AG04450 (cell line): ENCODE measurements at regions of chr10 and their contacts with region 1.

Region 1: DNA sequence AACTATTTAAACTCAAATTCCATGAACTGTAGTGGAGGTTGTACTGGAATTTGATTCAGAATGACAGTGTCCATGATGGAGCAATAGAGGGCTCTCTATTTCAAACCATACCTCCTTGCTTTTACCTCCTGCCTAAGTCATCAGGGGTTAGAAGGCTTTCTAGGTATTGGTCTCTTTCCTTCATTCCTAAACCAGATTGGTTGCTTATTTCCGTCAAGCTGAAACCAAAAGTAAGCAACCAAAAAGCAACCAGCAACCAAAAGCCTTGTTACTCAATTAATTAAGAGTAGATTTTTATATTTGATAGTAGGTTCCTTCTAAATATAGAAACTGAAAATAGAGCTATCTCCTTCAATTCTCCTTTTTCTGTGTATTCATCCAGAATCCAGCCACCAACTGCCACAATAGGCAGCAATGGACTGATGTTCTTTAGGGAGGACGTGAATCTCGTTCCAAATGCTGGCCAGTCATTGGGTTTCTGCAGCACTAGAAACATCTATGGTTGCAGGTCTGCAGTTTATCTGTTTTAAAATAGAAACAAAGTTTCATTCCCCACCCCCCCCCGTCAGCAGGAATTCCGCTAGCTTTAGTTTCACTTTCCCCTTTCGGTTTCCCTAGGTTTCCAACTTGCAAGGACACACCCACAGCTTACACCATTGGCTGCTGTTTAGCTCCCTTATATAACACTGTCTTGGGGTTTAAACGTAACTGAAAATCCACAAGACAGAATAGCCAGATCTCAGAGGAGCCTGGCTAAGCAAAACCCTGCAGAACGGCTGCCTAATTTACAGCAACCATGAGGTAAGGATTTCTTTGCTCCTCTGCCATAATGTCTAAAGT is at the start of gene IFIT1:
- DNase-seq: peak; percentile 85
- H3K4me3 ChIP-seq: peak within 1 kb of the TSS; percentile 75
- H3K27ac ChIP-seq: peak within 1 kb of the TSS; percentile 81
- H3K27me3 ChIP-seq: no peaks in the 10 kb centered on the region
- CTCF ChIP-seq: no peak
- polyA plus RNA-seq, gene IFIT1: 24.3 and 32.8 TPM in 2 replicates

Region 2: DNA sequence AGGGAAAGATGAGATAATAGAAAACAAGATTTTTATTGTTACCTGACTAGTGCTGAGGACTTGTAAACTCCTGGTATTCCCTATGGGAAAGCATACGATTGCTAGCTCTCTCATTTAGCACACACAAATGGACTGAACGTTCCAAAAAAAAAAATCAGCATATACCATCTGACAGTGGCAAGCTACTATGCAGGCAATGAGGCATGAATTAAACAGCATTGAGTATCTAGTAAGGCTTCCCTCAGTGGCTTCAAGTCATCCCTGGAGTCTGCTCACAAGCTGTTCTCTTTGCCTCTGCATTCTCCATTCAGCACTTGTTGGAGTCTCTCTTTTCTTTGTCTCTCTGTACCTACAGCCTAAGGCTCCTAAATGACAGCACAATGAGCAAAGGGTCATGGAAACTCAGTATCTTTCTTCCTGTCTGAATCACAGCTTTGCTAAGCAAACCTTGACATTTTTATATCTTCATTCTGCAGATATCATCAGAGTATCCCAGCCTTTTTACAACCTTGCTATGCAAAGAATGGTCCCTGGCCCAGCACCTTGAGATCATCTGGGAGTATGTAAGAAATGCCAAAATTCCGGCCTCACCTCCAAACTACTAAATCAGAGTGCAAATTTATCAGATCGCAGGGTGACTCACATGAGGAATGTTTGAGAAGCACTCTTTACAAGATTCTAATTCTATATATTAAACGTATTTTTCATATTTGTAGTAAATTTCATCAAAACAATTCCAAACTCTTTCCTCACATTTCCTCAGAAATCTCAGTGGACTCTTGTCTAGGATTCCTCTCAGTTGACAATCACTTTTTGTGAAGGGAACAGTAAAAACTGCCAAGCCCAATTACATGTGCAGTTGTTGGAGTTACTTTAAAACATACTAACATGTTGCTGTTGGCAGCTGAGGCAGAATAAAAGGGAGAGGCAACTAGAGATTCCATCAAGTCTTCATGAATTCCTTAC is 129.8 kb before region 1 on chr10:
- CTCF ChIA-PET with region 1: interaction called, 3 read pairs
- POLR2A ChIA-PET with region 1: interaction called, 12 read pairs
- DNase-seq: no peak
- H3K4me3 ChIP-seq: no peak overlapping the region
- H3K27ac ChIP-seq: no peak overlapping the region
- H3K27me3 ChIP-seq: no peaks in the 10 kb centered on the region
- CTCF ChIP-seq: no peak

Region 3: GRCh38 chr10:89342206-89342958 is 49.8 kb before region 1 on chr10:
- CTCF ChIA-PET with region 1: no interaction called
- POLR2A ChIA-PET with region 1: no interaction called
- DNase-seq: no peak
- H3K4me3 ChIP-seq: no peak overlapping the region
- H3K27ac ChIP-seq: no peak overlapping the region
- H3K27me3 ChIP-seq: no peaks in the 10 kb centered on the region
- CTCF ChIP-seq: no peak